ENCODE measurements at regions of chr4 and their contacts with region 1.

Region 1: DNA sequence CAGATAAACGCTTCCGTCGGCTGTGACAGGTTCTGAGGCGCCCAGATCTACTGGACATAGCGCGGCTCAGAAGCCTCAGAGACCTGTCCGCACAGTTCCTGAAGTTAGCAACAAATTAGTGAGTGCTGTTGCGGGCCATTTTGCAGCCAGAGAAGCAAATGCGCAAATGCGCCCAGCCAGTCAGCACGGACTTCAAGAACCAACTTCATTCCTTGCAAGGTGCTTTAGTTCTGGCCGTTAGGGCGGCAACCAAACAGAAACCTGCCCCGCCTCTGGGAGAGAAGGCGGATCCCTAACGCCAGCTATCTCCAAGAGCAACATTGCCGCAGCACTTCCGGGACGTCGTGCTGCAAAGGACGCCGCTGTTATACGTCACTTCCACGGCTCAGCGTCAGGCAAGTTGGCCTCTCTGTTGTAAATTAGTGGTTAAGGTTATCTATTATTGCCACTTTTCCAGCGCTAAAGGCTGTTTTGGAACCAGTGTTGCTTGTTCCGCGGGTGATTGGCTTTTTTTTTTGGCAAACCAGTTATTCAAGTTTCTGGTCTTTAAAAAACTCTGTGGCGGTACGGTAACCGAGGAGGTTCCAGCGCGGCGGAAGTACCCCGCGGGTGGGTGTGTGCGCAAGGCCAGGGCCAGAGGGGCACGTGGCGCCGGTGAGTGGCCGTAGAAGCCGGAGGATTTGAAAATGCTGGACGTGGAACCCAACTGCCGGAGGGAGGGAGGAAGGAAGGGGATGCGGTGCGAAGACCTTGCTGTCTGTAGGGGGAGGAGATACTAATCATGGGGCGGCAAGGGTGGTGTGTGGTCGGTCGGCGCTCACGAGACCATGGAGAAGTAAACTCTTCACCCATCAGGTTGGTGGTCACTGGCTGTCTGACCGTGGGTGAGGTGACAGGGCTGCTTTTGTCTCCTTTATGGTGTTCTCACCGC is at the start of gene GAR1:
- DNase-seq: peak; percentile 58
- H3K4me3 ChIP-seq: peak within 1 kb of the TSS; percentile 65
- H3K27me3 ChIP-seq: no peaks in the 10 kb centered on the region
- CTCF ChIP-seq: no peak
- polyA plus RNA-seq, gene GAR1: 5.8 and 13.3 TPM in 2 replicates

Region 2: GRCh38 chr4:109410776-109411175 is 404.6 kb before region 1 on chr4:
- CTCF ChIA-PET with region 1: no interaction called
- POLR2A ChIA-PET with region 1: interaction called, 10 read pairs
- DNase-seq: no peak
- H3K4me3 ChIP-seq: no peak overlapping the region
- H3K27me3 ChIP-seq: no peaks in the 10 kb centered on the region
- CTCF ChIP-seq: no peak

Region 3: GRCh38 chr4:109803924-109804571 is 11.4 kb before region 1 on chr4:
- CTCF ChIA-PET with region 1: no interaction called
- POLR2A ChIA-PET with region 1: no interaction called
- DNase-seq: no peak
- H3K4me3 ChIP-seq: no peak overlapping the region
- H3K27me3 ChIP-seq: no peaks in the 10 kb centered on the region; the same call in 1 of the 2 replicates
- CTCF ChIP-seq: peak; percentile 49

Region 4: GRCh38 chr4:109826719-109827118 is 11.3 kb after region 1 on chr4:
- CTCF ChIA-PET with region 1: interaction called, 14 read pairs
- POLR2A ChIA-PET with region 1: no interaction called
- DNase-seq: no peak
- H3K4me3 ChIP-seq: no peak overlapping the region
- H3K27me3 ChIP-seq: no peaks in the 10 kb centered on the region
- CTCF ChIP-seq: peak; percentile 60